Gastrocnemius medialis (tissue), 4 donors: ENCODE measurements at regions of chr6 and their contacts with region 1.

Region 1: GRCh38 chr6:75208298-75209183 is 2.7 kb upstream of the COL12A1 start:
- DNase-seq: peak; percentile 53 to 71
- ATAC-seq: peak; percentile 64 to 71
- H3K4me3 ChIP-seq: peak overlapping the region in 3 of 4 donors; percentile 28 to 56 (median 36)
- H3K27ac ChIP-seq: peak overlapping the region in 3 of 4 donors; percentile 29 to 55 (median 29)
- H3K4me1 ChIP-seq: peaks cover 5 to 27% of the 10 kb centered on the region in 2 donors
- H3K27me3 ChIP-seq: peaks cover 19 to 40% (median 33%) of the 10 kb centered on the region in 3 donors
- CTCF ChIP-seq: peak; percentile 80 to 89 (median 86)
- POLR2A ChIP-seq: no peak

Region 2: DNA sequence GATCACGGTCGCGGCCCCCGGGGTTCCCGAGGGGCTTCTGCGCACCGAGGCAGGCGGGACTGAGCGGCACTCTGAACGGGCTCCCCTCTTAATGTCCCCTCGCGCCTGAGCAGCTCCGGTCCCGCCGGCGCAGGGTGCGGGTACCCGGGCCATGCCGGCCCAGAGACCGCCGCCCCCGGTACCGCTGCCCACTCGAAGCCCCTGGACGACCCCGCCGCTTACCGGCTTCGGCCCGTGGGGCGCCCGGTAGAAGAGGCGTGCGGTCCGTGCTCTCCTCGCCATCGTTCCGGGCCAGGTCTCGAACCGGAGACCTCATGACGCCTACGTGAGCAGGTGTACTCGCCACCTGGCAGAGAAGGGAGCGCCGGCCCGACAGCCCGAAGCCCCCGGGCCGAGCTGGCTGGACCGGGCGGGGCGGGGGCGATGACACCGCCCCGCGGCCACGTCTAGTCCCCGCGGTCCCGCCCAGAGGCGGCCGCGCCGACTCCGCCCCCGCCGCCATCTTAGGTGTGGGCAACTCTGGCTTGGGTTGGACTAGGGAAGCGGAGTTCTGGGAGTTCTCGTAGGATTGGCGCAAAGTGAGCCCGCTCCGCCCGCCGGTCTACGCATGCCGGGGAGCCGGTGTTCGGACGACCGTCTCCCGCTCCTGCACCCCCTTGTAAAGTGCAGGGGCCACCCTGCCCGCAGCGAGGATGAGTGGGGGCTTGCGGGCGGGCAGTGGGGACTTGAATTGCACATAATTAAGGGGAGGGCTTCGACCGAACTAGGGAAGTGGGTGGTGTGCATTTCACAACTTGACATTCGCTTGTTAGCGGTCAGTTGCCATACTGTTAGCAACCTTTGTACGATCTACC is 1554.7 kb before region 1 on chr6 and contains the start of gene SLC17A5:
- in situ Hi-C with region 1: loop called in 1 of 4 experiments (anchors 25 kb)
- intact Hi-C with region 1: no loop called
- DNase-seq: peak; percentile 89 to 96
- ATAC-seq: peak; percentile 93 to 94
- H3K4me3 ChIP-seq: peak within 1 kb of the TSS; percentile 83 to 99 (median 97)
- H3K27ac ChIP-seq: peak within 1 kb of the TSS; percentile 96 to 99 (median 98)
- H3K4me1 ChIP-seq: peaks cover 18% of the 10 kb centered on the region in 2 donors
- H3K27me3 ChIP-seq: no peaks in the 10 kb centered on the region
- CTCF ChIP-seq: peak in 2 of 5 experiments; percentile 6 to 7
- POLR2A ChIP-seq: peak; percentile 64 to 76
- total RNA-seq, gene SLC17A5: 2.6 to 11.5 (median 5.4) TPM

Region 3: DNA sequence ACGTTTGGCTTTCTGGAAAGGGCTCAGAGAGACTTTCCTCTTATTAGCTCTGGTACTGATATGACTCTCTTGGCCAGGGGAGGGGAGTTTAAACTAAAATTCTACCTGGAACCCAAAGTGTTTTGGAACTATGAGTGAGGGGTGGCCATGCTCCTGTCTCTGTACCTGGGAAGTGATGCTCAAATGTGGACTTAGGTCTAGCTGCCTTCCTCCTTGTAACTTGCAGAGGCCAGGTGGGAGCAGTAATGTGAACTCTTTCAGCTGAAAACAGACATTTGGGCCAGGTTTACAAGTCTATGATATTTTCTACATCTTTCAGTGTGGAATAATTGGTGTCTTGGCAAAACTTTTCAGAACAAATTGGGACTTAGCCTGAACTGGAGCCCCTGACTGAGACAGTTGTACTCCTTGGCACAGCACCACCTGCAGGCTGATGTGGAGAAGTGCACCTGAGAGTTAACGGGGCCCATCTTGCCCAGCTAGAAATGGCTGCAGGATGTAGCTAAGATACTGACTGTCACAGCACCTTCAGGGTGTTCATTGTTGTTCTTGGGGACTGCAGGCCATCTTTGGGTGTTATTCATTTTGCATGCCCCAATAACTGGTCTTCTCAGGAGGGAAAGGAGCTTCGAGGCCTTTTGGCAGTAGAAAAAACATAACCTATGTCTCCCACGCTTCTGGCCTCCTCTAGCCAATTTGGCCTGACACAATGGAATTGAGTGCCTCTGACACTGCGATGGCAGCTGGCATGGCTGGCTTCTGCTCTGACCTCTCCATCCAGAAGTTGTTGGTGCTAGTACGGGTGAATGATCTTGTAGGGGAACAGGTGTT is 1475.5 kb before region 1 on chr6:
- in situ Hi-C with region 1: loop called in 3 of 4 experiments (anchors 10 to 25 kb)
- intact Hi-C with region 1: no loop called
- DNase-seq: peak; percentile 18 to 20
- ATAC-seq: peak; percentile 45 to 65
- H3K4me3 ChIP-seq: no peak overlapping the region
- H3K27ac ChIP-seq: no peak overlapping the region
- H3K4me1 ChIP-seq: no peaks in the 10 kb centered on the region
- H3K27me3 ChIP-seq: no peaks in the 10 kb centered on the region
- CTCF ChIP-seq: peak; percentile 55 to 77 (median 68)
- POLR2A ChIP-seq: no peak

Region 4: GRCh38 chr6:73854998-73855718 is 1353.4 kb before region 1 on chr6:
- in situ Hi-C with region 1: loop called in 1 of 4 experiments (anchors 25 kb)
- intact Hi-C with region 1: loop called (anchors 2 kb)
- DNase-seq: no peak
- ATAC-seq: no peak
- H3K4me3 ChIP-seq: no peak overlapping the region
- H3K27ac ChIP-seq: no peak overlapping the region
- H3K4me1 ChIP-seq: no peaks in the 10 kb centered on the region
- H3K27me3 ChIP-seq: no peaks in the 10 kb centered on the region
- CTCF ChIP-seq: peak; percentile 37 to 71 (median 54)
- POLR2A ChIP-seq: no peak

Region 5: DNA sequence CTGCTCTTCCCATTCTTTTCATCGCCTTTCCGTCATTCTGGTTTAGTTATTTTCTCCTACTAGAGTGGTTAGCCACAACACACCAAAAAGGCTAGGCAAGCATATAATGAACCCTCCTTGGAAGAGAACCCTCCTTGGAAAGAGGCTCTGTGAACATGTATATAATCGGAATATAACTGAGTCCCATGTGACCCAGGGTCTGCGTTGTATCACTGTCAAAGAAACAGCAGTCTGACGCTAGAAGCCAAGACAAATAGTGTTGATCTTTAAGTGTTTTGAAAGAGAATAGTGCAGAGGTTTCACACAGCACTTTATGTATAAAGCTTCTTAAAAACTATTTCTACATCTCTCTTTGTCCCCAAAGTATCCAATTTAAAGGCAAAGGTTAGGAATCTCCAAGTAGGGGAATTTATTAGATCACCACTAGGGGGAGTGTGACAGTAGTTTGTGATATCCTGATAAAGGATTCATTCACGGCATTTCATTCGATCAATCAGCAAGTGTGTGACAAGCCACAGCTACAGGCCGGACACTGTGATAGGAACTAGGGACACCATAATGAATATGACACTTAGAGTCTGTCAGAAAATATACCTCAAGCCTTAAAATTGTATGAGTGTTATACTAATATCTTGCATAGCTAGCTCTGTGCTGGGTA is 1117.3 kb before region 1 on chr6:
- in situ Hi-C with region 1: loop called (anchors 10 to 25 kb)
- intact Hi-C with region 1: loop called (anchors 1 kb)
- DNase-seq: no peak
- ATAC-seq: peak in 1 of 2 donors; percentile 36
- H3K4me3 ChIP-seq: no peak overlapping the region
- H3K27ac ChIP-seq: no peak overlapping the region
- H3K4me1 ChIP-seq: no peaks in the 10 kb centered on the region
- H3K27me3 ChIP-seq: no peaks in the 10 kb centered on the region
- CTCF ChIP-seq: peak; percentile 30 to 56 (median 39)
- POLR2A ChIP-seq: no peak

Region 6: DNA sequence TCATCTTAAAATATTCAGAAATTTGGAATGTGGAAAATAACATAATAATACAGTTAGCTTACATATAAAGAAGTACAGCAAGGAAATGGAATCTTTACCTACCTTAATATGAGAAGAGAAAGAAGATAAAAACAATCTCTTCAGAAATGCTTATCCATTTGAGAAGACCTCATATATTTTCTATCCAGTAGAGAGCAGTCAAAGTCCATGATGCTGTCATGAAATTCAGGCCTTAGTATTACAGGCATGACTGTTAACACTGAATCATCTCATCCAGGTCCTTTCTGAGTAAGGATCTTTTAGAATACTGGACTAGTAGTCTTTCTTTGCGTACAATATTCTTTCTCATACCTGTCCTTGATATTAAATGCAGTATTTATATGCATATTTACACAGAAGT is 799.1 kb before region 1 on chr6:
- in situ Hi-C with region 1: loop called in 3 of 4 experiments (anchors 10 to 25 kb)
- intact Hi-C with region 1: loop called (anchors 2 kb)
- DNase-seq: no peak
- ATAC-seq: peak; percentile 56 to 68
- H3K4me3 ChIP-seq: no peak overlapping the region
- H3K27ac ChIP-seq: no peak overlapping the region
- H3K4me1 ChIP-seq: no peaks in the 10 kb centered on the region
- H3K27me3 ChIP-seq: no peaks in the 10 kb centered on the region
- CTCF ChIP-seq: peak in 1 of 5 experiments; percentile 22
- POLR2A ChIP-seq: no peak

Region 7: DNA sequence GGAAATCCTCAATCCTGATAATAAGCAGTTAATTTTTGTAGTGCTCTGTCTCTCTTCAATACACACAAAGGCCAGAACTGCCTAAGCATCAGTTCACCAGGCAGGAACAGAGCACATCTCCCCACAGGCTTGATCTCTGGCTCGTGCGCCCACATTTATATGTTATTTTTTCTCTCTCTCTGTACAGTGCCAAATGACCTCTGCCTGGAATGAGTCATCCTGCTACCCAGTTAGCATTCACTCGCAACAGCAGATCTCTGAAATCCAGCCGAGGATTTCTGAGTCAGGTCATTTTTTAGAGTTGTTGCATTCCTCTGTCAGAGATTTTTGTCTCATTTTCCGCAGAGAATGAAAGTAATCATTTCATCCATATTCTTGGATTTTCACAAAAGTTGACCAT is 109.8 kb before region 1 on chr6:
- in situ Hi-C with region 1: no loop called
- intact Hi-C with region 1: loop called (anchors 5 kb)
- DNase-seq: peak; percentile 35 to 60
- ATAC-seq: peak; percentile 82 to 88
- H3K4me3 ChIP-seq: no peak overlapping the region
- H3K27ac ChIP-seq: no peak overlapping the region
- H3K4me1 ChIP-seq: no peaks in the 10 kb centered on the region
- H3K27me3 ChIP-seq: no peaks in the 10 kb centered on the region
- CTCF ChIP-seq: no peak
- POLR2A ChIP-seq: no peak

Region 8: DNA sequence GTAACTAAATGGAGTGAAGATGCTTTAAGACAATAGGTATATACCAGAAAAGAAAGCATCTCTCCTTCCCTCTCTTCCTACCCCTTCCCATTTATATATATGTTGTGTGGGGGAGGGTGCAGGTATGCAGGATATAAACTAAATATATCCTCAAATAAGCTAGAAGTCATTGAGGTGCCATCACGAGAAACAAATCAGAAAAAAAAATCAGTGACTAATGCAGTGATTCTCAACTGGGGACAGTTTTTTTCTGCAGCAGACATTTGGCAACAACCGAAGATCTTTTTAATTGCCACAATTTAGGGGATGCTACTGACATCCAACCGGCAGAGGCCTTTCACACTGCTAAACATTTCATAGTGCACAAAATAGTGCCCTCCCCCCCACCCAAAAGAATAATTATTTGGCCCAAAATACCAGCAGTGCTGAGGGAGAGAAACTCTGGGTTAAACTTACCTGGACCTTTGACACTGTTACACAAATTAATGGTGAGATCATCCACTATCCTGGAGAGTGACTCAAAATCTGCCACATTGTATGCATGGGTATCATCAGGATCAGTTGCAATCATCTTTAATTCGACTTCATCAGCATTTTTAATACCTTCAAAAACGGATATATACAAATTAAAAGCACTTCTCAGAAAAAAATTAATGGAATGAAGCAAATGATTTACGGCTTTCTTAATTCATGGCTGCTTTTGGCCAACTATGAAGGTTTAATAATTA is 57.7 kb before region 1 on chr6:
- in situ Hi-C with region 1: no loop called
- intact Hi-C with region 1: no loop called
- DNase-seq: no peak
- ATAC-seq: no peak
- H3K4me3 ChIP-seq: no peak overlapping the region
- H3K27ac ChIP-seq: no peak overlapping the region
- H3K4me1 ChIP-seq: no peaks in the 10 kb centered on the region
- H3K27me3 ChIP-seq: no peaks in the 10 kb centered on the region
- CTCF ChIP-seq: no peak
- POLR2A ChIP-seq: no peak

Region 9: DNA sequence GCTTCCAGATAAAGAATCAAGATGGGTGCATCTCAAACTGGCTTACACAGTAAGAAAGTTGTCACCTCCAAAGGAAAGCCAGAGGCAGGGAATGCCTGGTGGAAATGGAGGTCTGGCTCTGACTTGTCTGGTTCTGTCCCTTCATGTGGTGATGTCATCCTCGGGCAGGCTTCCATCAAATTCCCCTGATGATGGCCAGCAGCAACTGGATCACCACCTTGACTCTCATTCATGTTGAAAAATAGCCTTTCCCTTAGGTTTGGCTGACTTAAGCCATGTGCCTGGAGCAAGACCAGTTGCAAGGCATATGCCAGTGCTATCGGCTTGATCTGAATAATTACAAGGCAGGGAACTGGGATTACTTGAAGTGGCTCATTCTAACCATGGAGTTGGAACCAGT is 835.1 kb after region 1 on chr6:
- in situ Hi-C with region 1: no loop called
- intact Hi-C with region 1: no loop called
- DNase-seq: no peak
- ATAC-seq: no peak
- H3K4me3 ChIP-seq: no peak overlapping the region
- H3K27ac ChIP-seq: no peak overlapping the region
- H3K4me1 ChIP-seq: no peaks in the 10 kb centered on the region
- H3K27me3 ChIP-seq: no peaks in the 10 kb centered on the region
- CTCF ChIP-seq: no peak
- POLR2A ChIP-seq: no peak